B cell (primary cell): ENCODE measurements at regions of chr17 and their contacts with region 1.

Region 1: GRCh38 chr17:57955183-57955931 is at the start of gene CUEDC1:
- DNase-seq: peak; percentile 71
- ATAC-seq: peak; percentile 79
- H3K4me3 ChIP-seq: peak within 1 kb of the TSS in 3 of 5 experiments; percentile 33 to 46 (median 40)
- H3K4me3 Mint-ChIP-seq: peak within 1 kb of the TSS; percentile 79
- H3K27ac ChIP-seq: no peak within 1 kb of the TSS
- H3K27ac Mint-ChIP-seq: peak within 1 kb of the TSS; percentile 56
- H3K4me1 ChIP-seq: peaks cover 29 to 30% of the 10 kb centered on the region in 2 donors
- H3K4me1 Mint-ChIP-seq: peaks cover 32% of the 10 kb centered on the region
- H3K27me3 ChIP-seq: peaks cover 0 to 72% (median 38%) of the 10 kb centered on the region in 4 experiments
- H3K27me3 Mint-ChIP-seq: peaks cover 64% of the 10 kb centered on the region
- CTCF ChIP-seq: peak; percentile 43
- total RNA-seq, gene CUEDC1: not detected in 2 replicates

Region 2: DNA sequence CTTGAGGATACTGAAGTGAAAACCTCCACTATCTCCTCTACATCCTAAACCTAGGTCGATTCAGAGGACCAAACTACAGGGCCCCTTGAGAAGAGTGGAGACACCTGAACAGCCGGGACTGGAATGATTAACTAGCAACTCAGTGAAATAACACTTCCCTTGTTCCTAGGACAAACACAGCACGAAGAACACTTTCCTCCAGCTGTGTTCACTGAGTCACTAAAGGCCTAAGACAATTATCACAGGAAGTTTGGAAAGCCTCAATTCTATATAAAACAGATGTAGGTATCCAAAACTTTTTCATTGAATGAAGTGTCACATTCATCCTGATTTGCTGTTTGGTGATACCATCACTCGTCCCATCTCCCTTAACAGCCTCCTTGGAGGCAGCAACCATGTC is 15.3 kb after region 1 on chr17:
- CTCF ChIA-PET with region 1: no interaction called
- POLR2A ChIA-PET with region 1: no interaction called
- intact Hi-C with region 1: no loop called
- DNase-seq: no peak
- ATAC-seq: no peak
- H3K4me3 ChIP-seq: no peak overlapping the region
- H3K4me3 Mint-ChIP-seq: no peak overlapping the region
- H3K27ac ChIP-seq: no peak overlapping the region
- H3K27ac Mint-ChIP-seq: no peak overlapping the region
- H3K4me1 ChIP-seq: no peaks in the 10 kb centered on the region
- H3K4me1 Mint-ChIP-seq: no peaks in the 10 kb centered on the region
- H3K27me3 ChIP-seq: peaks cover 0 to 21% (median 2%) of the 10 kb centered on the region in 4 experiments
- H3K27me3 Mint-ChIP-seq: peaks cover 17% of the 10 kb centered on the region
- CTCF ChIP-seq: no peak

Region 3: GRCh38 chr17:57987580-57988421 is 32.4 kb after region 1 on chr17 and contains the start of gene VEZF1:
- CTCF ChIA-PET with region 1: interaction called, 4 read pairs
- POLR2A ChIA-PET with region 1: interaction called, 5 read pairs
- intact Hi-C with region 1: loop called (anchors 2 kb)
- DNase-seq: peak; percentile 89
- ATAC-seq: peak; percentile 70
- H3K4me3 ChIP-seq: peak within 1 kb of the TSS; percentile 50 to 89 (median 82)
- H3K4me3 Mint-ChIP-seq: peak within 1 kb of the TSS; percentile 95
- H3K27ac ChIP-seq: peak within 1 kb of the TSS; percentile 66 to 82
- H3K27ac Mint-ChIP-seq: peak within 1 kb of the TSS; percentile 97
- H3K4me1 ChIP-seq: peaks cover 36 to 41% of the 10 kb centered on the region in 2 donors
- H3K4me1 Mint-ChIP-seq: peaks cover 58% of the 10 kb centered on the region
- H3K27me3 ChIP-seq: no peaks in the 10 kb centered on the region
- H3K27me3 Mint-ChIP-seq: no peaks in the 10 kb centered on the region
- CTCF ChIP-seq: no peak
- total RNA-seq, gene VEZF1: 63.9 and 75.9 TPM in 2 replicates

Region 4: DNA sequence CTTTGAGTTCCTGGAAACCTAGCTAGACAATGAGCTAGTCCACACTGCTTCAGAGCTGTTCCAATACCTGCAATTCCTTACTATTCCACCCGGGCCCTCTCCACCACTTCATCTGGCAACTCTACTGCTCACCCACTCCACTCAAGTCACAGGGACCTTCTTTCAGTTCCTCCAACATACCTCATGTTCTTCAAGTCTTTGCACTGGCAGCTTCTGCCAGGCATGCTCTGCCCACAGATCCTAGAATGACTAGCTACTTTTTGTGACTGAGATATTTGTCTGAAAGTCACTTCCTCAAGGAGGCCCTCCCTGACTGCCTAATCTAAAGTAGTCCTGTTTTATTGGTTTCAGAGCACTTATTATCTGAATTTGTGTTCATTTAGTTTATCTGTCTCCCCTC is 650.1 kb after region 1 on chr17:
- CTCF ChIA-PET with region 1: no interaction called
- POLR2A ChIA-PET with region 1: no interaction called
- intact Hi-C with region 1: no loop called
- DNase-seq: no peak
- ATAC-seq: no peak
- H3K4me3 ChIP-seq: no peak overlapping the region
- H3K4me3 Mint-ChIP-seq: no peak overlapping the region
- H3K27ac ChIP-seq: no peak overlapping the region
- H3K27ac Mint-ChIP-seq: no peak overlapping the region
- H3K4me1 ChIP-seq: no peaks in the 10 kb centered on the region
- H3K4me1 Mint-ChIP-seq: no peaks in the 10 kb centered on the region
- H3K27me3 ChIP-seq: no peaks in the 10 kb centered on the region
- H3K27me3 Mint-ChIP-seq: no peaks in the 10 kb centered on the region
- CTCF ChIP-seq: no peak